Panc1 (cell line): ENCODE measurements at regions of chr17 and their contacts with region 1.

Region 1: GRCh38 chr17:43094129-43094835 is 30.9 kb downstream of the BRCA1 start:
- DNase-seq: no peak
- ATAC-seq: no peak
- H3K4me3 ChIP-seq: no peak overlapping the region
- H3K27ac ChIP-seq: no peak overlapping the region
- H3K4me1 ChIP-seq: no peaks in the 10 kb centered on the region
- H3K27me3 ChIP-seq: no peaks in the 10 kb centered on the region
- CTCF ChIP-seq: no peak

Region 2: DNA sequence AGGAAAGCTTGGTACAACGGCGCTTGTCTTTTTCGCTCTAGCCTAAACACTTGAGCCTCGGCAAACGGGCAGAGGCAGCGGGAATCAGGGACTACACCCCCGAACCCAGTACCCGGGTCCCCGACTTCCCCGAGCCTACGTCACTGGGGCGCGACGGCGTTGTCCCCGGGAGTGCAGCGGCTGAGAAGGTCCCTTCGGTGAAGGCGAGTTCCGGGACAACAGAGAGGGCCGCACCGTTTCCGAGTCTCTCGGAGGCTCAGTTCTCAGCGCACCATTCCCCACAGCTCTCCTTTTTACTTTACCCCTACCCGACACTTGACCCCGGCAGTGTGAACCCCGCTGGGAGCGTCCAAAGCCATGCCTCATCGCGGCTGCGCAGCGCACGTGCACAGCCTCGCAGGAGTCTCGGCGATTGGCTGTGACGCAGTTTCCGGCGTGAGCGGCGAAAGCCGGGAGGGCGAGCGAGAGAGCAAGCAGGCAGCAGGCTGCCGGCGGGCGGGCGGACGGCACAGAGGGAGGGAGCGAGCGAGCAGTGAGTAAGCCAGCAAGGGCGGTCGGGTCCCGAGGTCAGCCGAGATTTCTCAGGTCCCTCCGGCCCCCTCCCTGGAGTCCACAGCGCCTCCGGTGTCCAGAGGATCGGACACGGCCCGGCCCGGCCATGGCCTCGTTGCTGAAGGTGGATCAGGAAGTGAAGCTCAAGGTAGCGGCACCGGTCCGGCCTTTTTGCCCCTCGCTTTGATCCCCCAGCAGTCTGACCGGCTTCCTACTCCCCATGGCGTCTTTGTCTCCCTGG is 261.1 kb before region 1 on chr17 and contains the start of gene PSME3:
- CTCF ChIA-PET with region 1: no interaction called
- POLR2A ChIA-PET with region 1: interaction called, 11 read pairs
- in situ Hi-C with region 1: no loop called
- intact Hi-C with region 1: no loop called
- DNase-seq: peak; percentile 51
- ATAC-seq: peak; percentile 98
- H3K4me3 ChIP-seq: peak within 1 kb of the TSS; percentile 95 to 96
- H3K27ac ChIP-seq: peak within 1 kb of the TSS; percentile 93
- H3K4me1 ChIP-seq: peaks cover 8% of the 10 kb centered on the region; the same call in 1 of the 2 replicates
- H3K27me3 ChIP-seq: no peaks in the 10 kb centered on the region
- CTCF ChIP-seq: no peak
- total RNA-seq, gene PSME3: 110 TPM

Region 3: GRCh38 chr17:42980398-42981397 is 113.6 kb before region 1 on chr17 and contains the start of gene RUNDC1:
- CTCF ChIA-PET with region 1: interaction called, 16 read pairs
- POLR2A ChIA-PET with region 1: no interaction called
- in situ Hi-C with region 1: no loop called
- intact Hi-C with region 1: no loop called
- DNase-seq: no peak
- ATAC-seq: peak; percentile 96
- H3K4me3 ChIP-seq: peak within 1 kb of the TSS; percentile 68 to 78
- H3K27ac ChIP-seq: peak within 1 kb of the TSS; percentile 76
- H3K4me1 ChIP-seq: peaks cover 14% of the 10 kb centered on the region; the same call in 1 of the 2 replicates
- H3K27me3 ChIP-seq: no peaks in the 10 kb centered on the region
- CTCF ChIP-seq: no peak
- total RNA-seq, gene RUNDC1: 11.2 TPM

Region 4: GRCh38 chr17:43442711-43443110 is 348.4 kb after region 1 on chr17:
- CTCF ChIA-PET with region 1: no interaction called
- POLR2A ChIA-PET with region 1: no interaction called
- in situ Hi-C with region 1: no loop called
- intact Hi-C with region 1: no loop called
- DNase-seq: no peak
- ATAC-seq: no peak
- H3K4me3 ChIP-seq: no peak overlapping the region
- H3K27ac ChIP-seq: no peak overlapping the region
- H3K4me1 ChIP-seq: no peaks in the 10 kb centered on the region
- H3K27me3 ChIP-seq: no peaks in the 10 kb centered on the region
- CTCF ChIP-seq: no peak